A673 (cell line): ENCODE measurements at regions of chr10 and their contacts with region 1.

Region 1: DNA sequence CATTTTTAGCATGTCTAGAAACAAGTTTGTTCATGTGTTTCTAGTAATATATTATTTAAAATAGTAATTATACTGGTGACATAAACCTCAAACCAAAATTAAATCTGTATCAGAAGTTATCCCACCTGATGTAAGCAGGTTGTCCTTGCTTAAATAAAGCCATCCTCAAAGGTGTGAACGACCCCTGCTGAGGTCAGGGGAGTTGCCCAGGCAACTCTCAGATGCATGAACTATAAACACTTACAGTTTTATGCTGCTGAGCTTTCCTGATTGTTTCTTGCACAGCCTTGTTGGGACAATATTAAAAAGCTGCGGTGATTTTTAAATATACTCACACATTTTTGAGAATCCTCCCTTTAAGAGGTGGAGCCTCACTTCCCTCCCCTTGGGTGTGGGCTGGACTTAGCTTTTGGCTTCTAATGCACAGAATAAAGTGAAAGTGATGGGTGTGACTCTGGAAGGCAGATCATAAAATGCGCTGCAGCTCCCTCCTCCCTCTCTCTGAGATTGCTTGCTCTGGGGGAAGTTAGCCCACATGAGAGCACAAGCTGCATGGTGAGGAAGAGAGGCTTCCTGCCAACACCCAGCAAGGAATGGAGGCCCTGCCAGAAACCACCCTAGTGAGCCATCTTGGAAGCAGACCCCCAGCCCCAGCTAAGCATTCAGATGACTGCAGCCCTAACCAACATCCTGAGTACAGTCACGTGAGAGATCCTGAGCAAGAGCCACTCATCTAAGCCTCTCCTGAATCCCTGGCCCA is 152.7 kb downstream of the SKIDA1 start:
- DNase-seq: peak; percentile 96
- H3K4me3 ChIP-seq: peak overlapping the region; percentile 5
- H3K27ac ChIP-seq: peak overlapping the region; percentile 59
- H3K4me1 ChIP-seq: peaks cover 16% of the 10 kb centered on the region
- H3K27me3 ChIP-seq: no peaks in the 10 kb centered on the region
- CTCF ChIP-seq: no peak

Region 2: GRCh38 chr10:20922451-20922850 is 450.4 kb before region 1 on chr10:
- CTCF ChIA-PET with region 1: no interaction called
- POLR2A ChIA-PET with region 1: no interaction called
- intact Hi-C with region 1: no loop called
- DNase-seq: no peak
- H3K4me3 ChIP-seq: no peak overlapping the region
- H3K27ac ChIP-seq: no peak overlapping the region
- H3K4me1 ChIP-seq: no peaks in the 10 kb centered on the region
- H3K27me3 ChIP-seq: no peaks in the 10 kb centered on the region
- CTCF ChIP-seq: no peak

Region 3: GRCh38 chr10:21292763-21293517 is 79.9 kb before region 1 on chr10:
- CTCF ChIA-PET with region 1: no interaction called
- POLR2A ChIA-PET with region 1: no interaction called
- intact Hi-C with region 1: loop called (anchors 10 kb)
- DNase-seq: peak; percentile 98
- H3K4me3 ChIP-seq: peak overlapping the region; percentile 32
- H3K27ac ChIP-seq: peak overlapping the region; percentile 85
- H3K4me1 ChIP-seq: peaks cover 33% of the 10 kb centered on the region
- H3K27me3 ChIP-seq: no peaks in the 10 kb centered on the region
- CTCF ChIP-seq: no peak

Region 4: GRCh38 chr10:21385996-21386610 is 13.3 kb after region 1 on chr10:
- CTCF ChIA-PET with region 1: interaction called, 3 read pairs
- POLR2A ChIA-PET with region 1: interaction called, 10 read pairs
- intact Hi-C with region 1: no loop called
- DNase-seq: no peak
- H3K4me3 ChIP-seq: no peak overlapping the region
- H3K27ac ChIP-seq: no peak overlapping the region
- H3K4me1 ChIP-seq: peaks cover 5% of the 10 kb centered on the region
- H3K27me3 ChIP-seq: no peaks in the 10 kb centered on the region
- CTCF ChIP-seq: peak; percentile 21; the same call in 1 of the 2 replicates

Region 5: DNA sequence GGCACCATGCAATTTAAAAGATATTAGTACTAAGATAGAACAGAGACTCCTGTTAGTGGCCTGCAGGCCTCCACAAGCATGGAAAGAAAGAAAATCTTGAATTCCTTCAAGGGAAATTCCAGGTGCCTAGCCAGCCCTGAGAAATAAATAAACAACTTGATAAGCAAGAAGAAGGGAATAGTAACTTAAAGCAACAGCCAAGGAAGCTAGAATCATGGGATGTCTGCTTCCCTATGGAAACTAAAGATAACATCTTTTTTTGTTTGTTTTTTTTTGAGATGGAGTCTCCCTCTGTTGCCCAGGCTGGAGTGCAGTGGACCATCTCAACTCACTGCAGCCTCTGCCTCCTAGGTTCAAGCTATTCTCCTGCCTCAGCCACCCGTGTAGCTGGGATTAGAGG is 24.1 kb after region 1 on chr10:
- CTCF ChIA-PET with region 1: no interaction called
- POLR2A ChIA-PET with region 1: no interaction called
- intact Hi-C with region 1: no loop called
- DNase-seq: no peak
- H3K4me3 ChIP-seq: no peak overlapping the region
- H3K27ac ChIP-seq: no peak overlapping the region
- H3K4me1 ChIP-seq: peaks cover 21% of the 10 kb centered on the region
- H3K27me3 ChIP-seq: no peaks in the 10 kb centered on the region
- CTCF ChIP-seq: no peak